ENCODE measurements at regions of chr6 and their contacts with region 1.

Region 1: DNA sequence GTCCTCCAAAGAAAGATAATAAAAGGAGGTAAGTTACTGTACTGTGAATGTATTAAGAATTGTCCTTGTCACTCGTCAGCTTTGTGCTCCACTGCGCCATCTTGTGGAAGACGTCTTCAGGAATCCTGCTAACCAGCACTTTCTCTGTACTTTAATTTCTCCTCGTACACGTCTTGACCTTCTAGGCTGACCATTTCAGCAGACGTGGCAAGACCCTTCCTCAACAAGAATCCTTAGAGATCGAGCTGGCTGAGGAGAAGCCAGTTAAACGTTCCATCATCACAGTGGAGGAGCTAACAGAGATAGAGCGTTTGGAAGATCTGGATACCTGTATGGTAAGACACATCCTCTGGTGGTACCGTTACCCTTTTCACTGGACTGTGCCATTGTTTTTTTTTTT is 95.5 kb upstream of the SCGN start:
- H3K4me3 Mint-ChIP-seq: no peak overlapping the region
- H3K27ac Mint-ChIP-seq: no peak overlapping the region
- H3K4me1 Mint-ChIP-seq: peaks cover 4% of the 10 kb centered on the region
- H3K27me3 Mint-ChIP-seq: no peaks in the 10 kb centered on the region

Region 2: DNA sequence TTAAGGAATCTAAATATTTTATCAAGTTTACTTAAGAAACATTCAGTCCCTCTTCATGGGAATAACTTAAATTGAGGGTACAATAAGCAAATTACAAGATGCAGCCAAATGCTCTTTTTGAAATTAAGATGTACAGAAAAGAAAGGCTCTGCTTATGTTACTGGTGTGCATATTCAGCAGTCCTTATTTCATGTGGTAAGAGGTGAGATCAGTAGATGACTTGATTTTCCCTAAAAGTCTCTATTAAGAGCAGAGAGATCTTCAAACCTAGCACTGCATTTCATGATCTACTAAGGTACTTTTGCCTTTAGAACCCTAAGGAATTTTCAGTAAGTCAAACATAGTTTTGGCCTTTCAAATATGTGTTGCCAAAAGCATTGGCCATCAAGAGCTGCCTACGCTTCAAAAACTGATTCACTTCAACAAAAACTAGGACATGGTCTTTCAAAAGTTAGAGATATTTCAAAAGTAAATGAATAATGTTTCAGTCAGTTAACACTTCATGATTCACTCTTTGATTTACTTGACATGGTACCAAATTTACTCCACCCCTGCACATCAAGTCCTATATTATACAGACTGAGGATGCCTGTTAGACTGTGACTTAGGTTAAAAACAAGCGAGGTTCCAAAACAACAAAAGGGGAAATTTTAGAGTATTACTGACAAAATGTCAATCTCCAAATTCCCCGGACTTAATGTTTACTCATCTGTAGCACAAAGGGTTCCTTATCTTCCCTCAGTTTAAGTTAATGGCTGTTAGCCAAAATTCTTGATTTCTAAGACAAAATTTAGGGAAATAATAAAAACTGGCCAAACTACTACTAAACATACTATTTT is 856.8 kb before region 1 on chr6:
- intact Hi-C with region 1: no loop called
- H3K4me3 Mint-ChIP-seq: no peak overlapping the region
- H3K27ac Mint-ChIP-seq: no peak overlapping the region
- H3K4me1 Mint-ChIP-seq: peaks cover 12% of the 10 kb centered on the region
- H3K27me3 Mint-ChIP-seq: no peaks in the 10 kb centered on the region

Region 3: GRCh38 chr6:25223490-25223991 is 333.0 kb before region 1 on chr6:
- intact Hi-C with region 1: loop called (anchors 1 kb)
- H3K4me3 Mint-ChIP-seq: no peak overlapping the region
- H3K27ac Mint-ChIP-seq: no peak overlapping the region
- H3K4me1 Mint-ChIP-seq: peaks cover 28% of the 10 kb centered on the region
- H3K27me3 Mint-ChIP-seq: peaks cover 5% of the 10 kb centered on the region

Region 4: GRCh38 chr6:25263657-25264056 is 292.9 kb before region 1 on chr6:
- intact Hi-C with region 1: loop called (anchors 2 kb)
- H3K4me3 Mint-ChIP-seq: no peak overlapping the region
- H3K27ac Mint-ChIP-seq: no peak overlapping the region
- H3K4me1 Mint-ChIP-seq: no peaks in the 10 kb centered on the region
- H3K27me3 Mint-ChIP-seq: peaks cover 4% of the 10 kb centered on the region

Region 5: GRCh38 chr6:25499615-25500235 is 56.8 kb before region 1 on chr6:
- intact Hi-C with region 1: loop called (anchors 5 kb)
- H3K4me3 Mint-ChIP-seq: no peak overlapping the region
- H3K27ac Mint-ChIP-seq: no peak overlapping the region
- H3K4me1 Mint-ChIP-seq: peaks cover 13% of the 10 kb centered on the region
- H3K27me3 Mint-ChIP-seq: no peaks in the 10 kb centered on the region

Measured in dendritic cell treated with granulocyte-macrophage colony-stimulating factor and Interleukin-4, amounts not matched to agents 40 ng/mL and 50 ng/mL, for 4 days (primary cell).